ENCODE measurements at regions of chr1 and their contacts with region 1.

Region 1: DNA sequence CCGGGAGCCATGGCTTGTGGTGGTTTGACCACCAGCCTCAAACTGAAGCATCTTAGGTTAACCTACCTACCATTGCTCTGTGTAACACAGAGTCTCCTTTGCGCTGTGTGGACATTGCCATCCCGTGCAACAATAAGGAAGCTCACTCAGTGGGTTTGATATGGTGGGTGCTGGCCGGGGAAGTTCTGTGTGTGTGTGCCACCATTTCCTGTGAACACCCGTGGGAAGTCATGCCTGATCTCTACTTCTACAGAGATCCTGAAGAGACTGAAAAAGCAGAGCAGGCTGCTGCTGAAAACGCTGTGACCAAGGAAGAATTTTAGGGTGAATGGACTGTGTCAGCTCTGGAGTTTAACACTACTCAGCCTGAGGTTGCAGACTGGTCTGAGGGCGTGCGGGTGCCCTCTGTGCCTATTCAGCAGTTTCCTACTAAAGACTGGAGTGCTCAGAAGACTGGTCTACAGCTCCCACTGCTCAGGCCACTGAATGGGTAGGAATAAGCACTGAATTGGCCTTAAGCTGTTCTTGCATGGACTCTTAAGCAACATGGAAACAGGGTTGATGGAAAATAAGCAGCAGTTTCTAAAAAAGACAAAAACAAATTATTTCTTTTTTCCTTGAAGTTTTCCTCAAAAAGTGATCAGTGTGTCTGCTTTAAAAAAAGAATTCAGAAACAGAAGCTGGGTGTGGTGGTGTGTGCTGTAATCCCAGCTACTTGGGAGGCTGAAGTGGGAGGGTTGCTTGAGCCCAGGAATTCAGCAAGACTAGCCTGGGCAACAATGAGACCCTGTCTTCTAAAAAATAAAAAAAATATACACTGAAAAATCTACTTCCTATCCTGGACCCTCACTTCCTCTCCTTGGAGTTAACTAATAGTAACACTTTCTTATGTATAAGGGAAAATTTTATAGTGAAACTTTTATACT is 14.6 kb downstream of the CEP350 start:
- DNase-seq: no peak
- H3K4me3 ChIP-seq: no peak overlapping the region
- H3K27ac ChIP-seq: no peak overlapping the region
- H3K4me1 ChIP-seq: no peaks in the 10 kb centered on the region
- H3K27me3 ChIP-seq: no peaks in the 10 kb centered on the region
- CTCF ChIP-seq: no peak

Region 2: DNA sequence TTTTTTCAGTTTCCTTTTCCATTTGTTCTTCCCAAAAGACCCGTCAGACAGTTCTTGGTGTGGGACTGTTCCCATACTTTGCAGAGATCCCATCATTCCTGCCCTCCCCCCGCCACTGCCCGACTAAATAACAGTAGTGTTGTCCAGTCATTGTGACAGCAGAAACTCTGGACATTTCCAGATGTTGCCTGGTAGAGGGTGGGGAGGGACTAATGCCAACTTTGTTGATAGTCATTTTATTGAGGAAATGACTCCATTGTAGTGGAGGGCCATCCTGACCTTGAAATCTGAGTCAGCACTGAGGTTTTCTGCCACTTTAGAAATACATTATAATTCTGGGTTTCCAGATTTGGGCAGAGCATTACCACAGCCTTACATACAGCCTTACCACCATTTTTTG is 70.8 kb after region 1 on chr1:
- CTCF ChIA-PET with region 1: no interaction called
- dilution Hi-C with region 1: loop called (anchors 5 kb)
- in situ Hi-C with region 1: no loop called
- intact Hi-C with region 1: no loop called
- DNase-seq: peak; percentile 65
- H3K4me3 ChIP-seq: no peak overlapping the region
- H3K27ac ChIP-seq: no peak overlapping the region
- H3K4me1 ChIP-seq: peaks cover 9% of the 10 kb centered on the region
- H3K27me3 ChIP-seq: no peaks in the 10 kb centered on the region
- CTCF ChIP-seq: no peak

Measured in mammary epithelial cell (primary cell).